Activated T-helper 1 cell treated with anti-CD3 and anti-CD28 coated beads, Interleukin-12 subunit alpha, Interleukin-12 subunit beta, Interleukin-2, Interleukin-4 antibody, amounts not matched to agents 30 ng/mL and 10 ng/mL and 1 ng/mL, durations not matched to agents 14 hours and 24 hours and 36 hours (primary cell): ENCODE measurements at regions of chr2 and their contacts with region 1.

Region 1: GRCh38 chr2:172084734-172085459 is 410 bp upstream of the DLX1 start:
- DNase-seq: no peak
- H3K4me3 Mint-ChIP-seq: peak overlapping the region; percentile 67
- H3K27ac Mint-ChIP-seq: peak overlapping the region; percentile 75
- H3K4me1 Mint-ChIP-seq: peaks cover 49% of the 10 kb centered on the region
- H3K27me3 Mint-ChIP-seq: peaks cover 89% of the 10 kb centered on the region

Region 2: DNA sequence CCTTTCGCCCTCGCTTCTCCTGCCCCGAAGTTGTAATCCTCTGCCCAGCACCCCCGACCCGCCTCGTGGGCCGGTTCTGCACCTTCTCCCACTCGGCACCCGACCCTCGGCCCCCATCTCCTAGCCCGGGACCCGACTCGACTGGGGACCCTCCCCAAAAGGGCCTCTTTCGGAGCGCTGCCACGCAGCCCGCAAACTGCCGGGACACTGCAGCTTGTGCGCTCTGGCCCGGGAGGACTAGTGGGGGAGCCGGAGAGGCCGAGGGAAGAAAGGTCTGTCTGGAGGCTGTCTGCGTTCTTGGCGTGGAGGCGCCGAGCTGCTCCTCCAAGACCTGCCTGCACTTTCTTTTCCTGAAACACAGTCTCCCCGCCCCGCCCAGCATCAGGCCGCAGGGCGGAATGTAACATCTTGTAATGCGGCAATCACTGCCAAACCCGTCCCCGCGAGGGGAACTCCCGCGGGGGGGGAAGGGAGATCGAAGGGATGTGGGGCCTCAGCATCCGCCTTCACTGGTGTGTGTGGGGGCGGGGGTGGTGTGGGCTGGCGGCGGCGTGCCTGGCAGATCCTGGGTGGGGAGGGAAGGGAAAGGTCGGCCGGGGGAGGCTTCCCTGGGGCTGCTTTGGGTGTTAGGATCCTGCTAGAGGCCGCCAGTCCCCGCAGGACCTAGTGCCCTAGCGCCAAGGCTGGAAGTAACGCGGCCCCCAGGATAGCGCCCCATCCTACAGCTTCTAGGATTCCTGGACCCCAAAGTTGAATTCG is 10.4 kb after region 1 on chr2:
- intact Hi-C with region 1: loop called (anchors 1 kb)
- DNase-seq: peak; percentile 60
- H3K4me3 Mint-ChIP-seq: peak overlapping the region; percentile 81
- H3K27ac Mint-ChIP-seq: peak overlapping the region; percentile 48
- H3K4me1 Mint-ChIP-seq: peaks cover 39% of the 10 kb centered on the region
- H3K27me3 Mint-ChIP-seq: peaks cover 73% of the 10 kb centered on the region